ENCODE measurements at regions of chr17 and their contacts with region 1.

Region 1: GRCh38 chr17:82528484-82529265 is 9.1 kb downstream of the FOXK2 start:
- DNase-seq: peak; percentile 93
- ATAC-seq: peak; percentile 78
- H3K4me3 ChIP-seq: peak overlapping the region; percentile 16; the same call in 1 of the 2 replicates
- H3K27ac ChIP-seq: peak overlapping the region; percentile 70
- H3K4me1 ChIP-seq: peaks cover 48% of the 10 kb centered on the region
- H3K27me3 ChIP-seq: no peaks in the 10 kb centered on the region
- CTCF ChIP-seq: peak; percentile 84

Region 2: GRCh38 chr17:82457997-82458864 is 70.4 kb before region 1 on chr17 and contains the start of gene NARF:
- CTCF ChIA-PET with region 1: no interaction called
- POLR2A ChIA-PET with region 1: no interaction called
- intact Hi-C with region 1: loop called (anchors 2 kb)
- DNase-seq: peak; percentile 98
- ATAC-seq: peak; percentile 98
- H3K4me3 ChIP-seq: peak within 1 kb of the TSS; percentile 95
- H3K27ac ChIP-seq: peak within 1 kb of the TSS; percentile 92
- H3K4me1 ChIP-seq: peaks cover 22% of the 10 kb centered on the region
- H3K27me3 ChIP-seq: no peaks in the 10 kb centered on the region
- CTCF ChIP-seq: no peak
- total RNA-seq, gene NARF: 59.5 and 64.6 TPM in 2 replicates

Region 3: GRCh38 chr17:82551779-82552457 is 23.2 kb after region 1 on chr17:
- CTCF ChIA-PET with region 1: interaction called, 4 read pairs
- POLR2A ChIA-PET with region 1: no interaction called
- intact Hi-C with region 1: loop called (anchors 1 kb)
- DNase-seq: peak; percentile 77
- ATAC-seq: peak; percentile 91
- H3K4me3 ChIP-seq: no peak overlapping the region
- H3K27ac ChIP-seq: no peak overlapping the region
- H3K4me1 ChIP-seq: peaks cover 13% of the 10 kb centered on the region
- H3K27me3 ChIP-seq: no peaks in the 10 kb centered on the region
- CTCF ChIP-seq: peak; percentile 84